Cardiac septum (tissue), 1 donor: ENCODE measurements at regions of chr3 and their contacts with region 1.

Region 1: DNA sequence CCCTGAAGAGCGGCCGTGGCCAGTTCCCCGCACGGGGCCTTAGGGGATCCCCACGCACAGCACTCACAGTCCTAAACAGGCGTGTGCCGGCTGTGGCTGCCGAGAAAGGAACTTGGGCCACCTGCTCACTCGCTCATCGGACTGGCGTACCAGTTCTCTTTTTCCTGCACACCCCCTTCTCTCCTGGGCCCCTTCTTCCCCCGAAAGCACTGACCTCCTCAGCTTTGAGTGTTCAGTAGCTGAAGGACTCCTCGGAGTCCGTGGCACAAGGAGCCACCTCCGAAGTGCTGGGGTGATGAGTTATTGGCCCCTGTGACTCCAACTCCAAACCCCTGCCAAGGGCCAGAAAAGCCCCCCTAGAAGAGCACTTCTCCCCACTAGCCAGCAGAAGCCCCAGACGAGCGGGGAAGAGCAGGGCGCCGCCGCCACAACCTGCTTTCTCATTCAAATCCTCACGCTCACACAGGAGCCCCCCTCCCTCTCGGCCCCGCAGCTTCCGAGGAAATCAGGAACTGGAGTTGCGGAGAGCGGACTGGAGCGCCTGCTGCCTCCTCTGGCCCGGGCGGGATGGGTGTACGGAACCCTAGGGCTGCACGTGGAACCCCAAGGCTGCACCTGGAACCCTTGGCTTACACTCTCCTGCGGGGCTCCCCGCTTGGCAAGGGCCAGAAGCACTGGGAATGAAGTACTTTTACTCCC is at the start of gene PLCH1:
- DNase-seq: peak; percentile 79
- total RNA-seq, gene PLCH1: 0.16 TPM

Region 2: DNA sequence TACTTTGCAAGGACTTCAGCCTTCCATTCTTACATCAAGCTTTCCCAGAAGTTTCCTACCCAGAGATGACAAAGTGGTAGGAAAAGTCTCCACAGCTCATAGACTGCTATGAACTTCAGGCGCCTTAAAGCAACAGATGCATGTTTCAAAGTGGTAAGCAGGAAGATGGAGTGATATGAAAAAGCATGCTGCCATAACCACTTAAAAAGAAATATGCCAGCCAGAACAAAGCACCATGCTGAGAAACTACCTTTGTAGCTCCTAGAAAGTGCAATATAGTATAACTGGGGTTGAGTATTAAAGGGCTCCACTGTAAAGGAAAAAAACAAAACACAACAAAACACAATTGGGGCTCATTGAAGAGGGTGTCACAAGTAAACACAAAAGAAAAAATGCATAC is 258.9 kb before region 1 on chr3:
- intact Hi-C with region 1: no loop called
- DNase-seq: no peak

Region 3: DNA sequence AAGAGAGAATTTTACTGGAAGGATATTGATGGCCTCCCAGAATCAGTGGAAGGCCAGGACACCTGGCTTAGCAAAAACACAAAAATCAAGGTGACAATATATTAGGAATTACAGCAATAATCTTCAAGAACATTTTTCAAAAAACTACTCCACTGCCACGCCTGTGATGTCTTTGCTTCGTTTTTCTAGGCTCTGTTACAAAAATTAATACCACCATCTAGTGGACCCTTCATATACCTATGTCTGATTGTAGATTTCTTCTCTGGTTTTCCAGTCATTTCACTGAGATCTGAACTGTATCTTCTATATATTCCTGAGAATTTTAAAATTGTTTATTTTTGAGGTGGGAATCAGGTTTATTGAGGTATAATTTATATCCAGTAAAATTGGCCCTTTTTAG is 115.1 kb after region 1 on chr3:
- intact Hi-C with region 1: loop called (anchors 5 kb)
- DNase-seq: no peak